ENCODE measurements at regions of chr1 and their contacts with region 1.

Region 1: GRCh38 chr1:108559215-108560186 is at the start of gene EEIG2:
- DNase-seq: peak; percentile 96
- ATAC-seq: peak; percentile 90
- H3K4me3 ChIP-seq: peak within 1 kb of the TSS; percentile 57 to 85 (median 74)
- H3K4me3 Mint-ChIP-seq: peak within 1 kb of the TSS; percentile 98
- H3K27ac ChIP-seq: peak within 1 kb of the TSS; percentile 75 to 82
- H3K27ac Mint-ChIP-seq: peak within 1 kb of the TSS; percentile 92
- H3K4me1 ChIP-seq: peaks cover 54 to 59% of the 10 kb centered on the region in 2 donors
- H3K4me1 Mint-ChIP-seq: peaks cover 29% of the 10 kb centered on the region
- H3K27me3 ChIP-seq: no peaks in the 10 kb centered on the region
- H3K27me3 Mint-ChIP-seq: no peaks in the 10 kb centered on the region
- CTCF ChIP-seq: peak; percentile 75
- total RNA-seq, gene EEIG2: 11.7 and 13.6 TPM in 2 replicates

Region 2: GRCh38 chr1:108075055-108075454 is 484.4 kb before region 1 on chr1:
- CTCF ChIA-PET with region 1: no interaction called
- POLR2A ChIA-PET with region 1: no interaction called
- intact Hi-C with region 1: loop called (anchors 10 kb)
- DNase-seq: peak; percentile 88
- ATAC-seq: peak; percentile 79
- H3K4me3 ChIP-seq: no peak overlapping the region
- H3K4me3 Mint-ChIP-seq: peak overlapping the region; percentile 42
- H3K27ac ChIP-seq: peak overlapping the region; percentile 67 to 71
- H3K27ac Mint-ChIP-seq: peak overlapping the region; percentile 80
- H3K4me1 ChIP-seq: peaks cover 44 to 57% of the 10 kb centered on the region in 2 donors
- H3K4me1 Mint-ChIP-seq: peaks cover 62% of the 10 kb centered on the region
- H3K27me3 ChIP-seq: no peaks in the 10 kb centered on the region
- H3K27me3 Mint-ChIP-seq: no peaks in the 10 kb centered on the region
- CTCF ChIP-seq: no peak

Region 3: DNA sequence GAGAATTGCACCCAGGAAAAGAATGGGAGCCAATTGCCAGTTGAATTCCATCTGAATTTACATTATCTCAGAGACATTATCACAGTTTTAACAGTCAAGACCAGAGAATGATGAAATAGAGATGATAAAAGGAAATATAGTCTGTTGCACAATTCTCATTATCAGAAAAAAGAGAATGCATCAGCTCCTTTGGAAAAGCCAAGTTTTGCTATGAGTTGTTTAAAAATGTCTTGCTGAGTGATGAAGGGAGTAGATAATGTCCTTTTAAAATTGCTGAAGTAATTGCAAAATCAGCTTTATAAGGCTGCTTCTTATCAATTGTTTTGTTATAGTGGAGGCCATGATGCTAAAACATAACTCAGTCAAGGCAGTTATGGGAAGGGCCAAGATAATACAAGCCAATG is 37.5 kb before region 1 on chr1:
- CTCF ChIA-PET with region 1: interaction called, 325 read pairs
- POLR2A ChIA-PET with region 1: no interaction called
- intact Hi-C with region 1: no loop called
- DNase-seq: no peak
- ATAC-seq: no peak
- H3K4me3 ChIP-seq: no peak overlapping the region
- H3K4me3 Mint-ChIP-seq: no peak overlapping the region
- H3K27ac ChIP-seq: no peak overlapping the region
- H3K27ac Mint-ChIP-seq: no peak overlapping the region
- H3K4me1 ChIP-seq: no peaks in the 10 kb centered on the region
- H3K4me1 Mint-ChIP-seq: no peaks in the 10 kb centered on the region
- H3K27me3 ChIP-seq: peaks cover 0 to 4% (median 0%) of the 10 kb centered on the region in 4 experiments
- H3K27me3 Mint-ChIP-seq: peaks cover 16% of the 10 kb centered on the region
- CTCF ChIP-seq: no peak

Region 4: GRCh38 chr1:108590957-108591356 is 31.5 kb after region 1 on chr1:
- CTCF ChIA-PET with region 1: interaction called, 17 read pairs
- POLR2A ChIA-PET with region 1: no interaction called
- intact Hi-C with region 1: no loop called
- DNase-seq: peak; percentile 20
- ATAC-seq: peak; percentile 14
- H3K4me3 ChIP-seq: no peak overlapping the region
- H3K4me3 Mint-ChIP-seq: no peak overlapping the region
- H3K27ac ChIP-seq: no peak overlapping the region
- H3K27ac Mint-ChIP-seq: no peak overlapping the region
- H3K4me1 ChIP-seq: peaks cover 12 to 15% of the 10 kb centered on the region in 2 donors
- H3K4me1 Mint-ChIP-seq: peaks cover 24% of the 10 kb centered on the region
- H3K27me3 ChIP-seq: no peaks in the 10 kb centered on the region
- H3K27me3 Mint-ChIP-seq: no peaks in the 10 kb centered on the region
- CTCF ChIP-seq: no peak

Region 5: DNA sequence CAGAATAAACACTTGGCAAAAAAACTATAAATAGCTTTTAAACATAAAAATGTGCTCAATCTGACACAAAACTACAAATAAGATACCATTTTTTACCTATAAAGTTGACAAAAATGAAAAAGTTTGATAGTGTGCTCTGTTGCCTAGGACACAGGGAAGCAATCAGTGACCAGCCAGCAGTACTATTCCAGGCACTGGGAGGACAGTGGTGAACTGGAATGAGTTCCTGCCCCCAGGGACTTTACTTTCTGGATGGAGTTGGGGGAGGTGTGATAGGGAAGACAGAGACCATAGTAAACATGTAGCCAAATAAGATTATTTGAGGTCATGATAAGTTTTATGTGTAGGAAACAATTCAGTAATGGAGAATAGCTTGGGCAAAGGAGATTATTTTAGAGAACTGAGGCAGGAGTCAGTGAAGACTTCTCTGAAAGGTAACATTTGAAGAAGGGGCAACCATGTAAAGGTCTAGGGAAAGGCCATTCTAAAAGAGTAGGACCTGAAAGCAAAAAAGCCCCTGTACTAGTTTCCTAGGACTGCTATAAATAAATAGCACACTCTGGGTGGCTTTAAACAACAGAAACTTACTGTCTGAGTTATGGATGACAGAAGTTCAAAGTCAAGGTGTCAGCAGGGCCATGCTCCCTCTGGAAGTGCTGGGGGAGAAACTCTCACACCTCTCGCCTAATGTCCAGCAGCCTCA is 42.4 kb after region 1 on chr1:
- CTCF ChIA-PET with region 1: no interaction called
- POLR2A ChIA-PET with region 1: no interaction called
- intact Hi-C with region 1: no loop called
- DNase-seq: no peak
- ATAC-seq: no peak
- H3K4me3 ChIP-seq: no peak overlapping the region
- H3K4me3 Mint-ChIP-seq: no peak overlapping the region
- H3K27ac ChIP-seq: no peak overlapping the region
- H3K27ac Mint-ChIP-seq: no peak overlapping the region
- H3K4me1 ChIP-seq: no peaks in the 10 kb centered on the region
- H3K4me1 Mint-ChIP-seq: no peaks in the 10 kb centered on the region
- H3K27me3 ChIP-seq: no peaks in the 10 kb centered on the region
- H3K27me3 Mint-ChIP-seq: no peaks in the 10 kb centered on the region
- CTCF ChIP-seq: no peak

Region 6: DNA sequence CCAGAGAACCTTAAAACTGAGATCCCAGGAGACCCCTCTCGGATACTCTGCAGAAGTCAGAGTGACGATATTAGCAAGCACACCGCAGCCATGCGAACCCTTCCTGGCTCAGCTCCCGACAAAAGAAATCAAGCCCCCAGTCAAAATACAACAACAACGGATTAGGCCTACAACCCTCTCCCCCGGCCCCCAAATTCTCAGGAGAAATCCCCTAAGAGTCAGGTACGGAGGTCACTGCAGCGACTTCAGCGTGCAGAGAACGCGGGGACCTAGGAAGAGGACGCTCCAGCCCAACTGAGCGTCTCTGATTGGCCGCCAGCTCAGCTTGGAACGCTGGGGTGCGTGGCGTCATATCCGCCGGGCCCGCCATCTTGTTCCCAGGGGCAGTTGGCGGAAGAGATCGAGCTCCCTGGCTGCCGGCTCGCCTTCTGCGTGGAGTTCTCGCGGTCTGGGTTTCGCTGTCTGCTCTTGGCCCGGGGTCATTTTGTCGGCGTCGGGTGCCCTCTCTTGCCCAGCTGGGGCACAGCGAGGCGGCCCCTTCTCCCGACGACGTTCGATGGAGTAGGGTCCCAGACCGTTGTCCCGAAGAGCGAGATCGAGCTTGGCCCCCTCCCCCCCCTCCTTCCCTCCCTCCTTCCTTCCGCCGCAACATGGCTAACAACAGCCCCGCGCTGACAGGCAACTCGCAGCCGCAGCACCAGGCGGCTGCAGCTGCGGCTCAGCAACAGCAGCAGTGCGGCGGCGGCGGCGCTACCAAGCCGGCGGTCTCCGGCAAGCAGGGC is 132.6 kb after region 1 on chr1 and contains the start of gene PRPF38B:
- CTCF ChIA-PET with region 1: interaction called, 17 read pairs
- POLR2A ChIA-PET with region 1: interaction called, 8 read pairs
- intact Hi-C with region 1: loop called (anchors 2 kb)
- DNase-seq: peak; percentile 95
- ATAC-seq: peak; percentile 92
- H3K4me3 ChIP-seq: peak within 1 kb of the TSS; percentile 84 to 93 (median 90)
- H3K4me3 Mint-ChIP-seq: peak within 1 kb of the TSS; percentile 98
- H3K27ac ChIP-seq: peak within 1 kb of the TSS; percentile 96 to 99
- H3K27ac Mint-ChIP-seq: peak within 1 kb of the TSS; percentile 97
- H3K4me1 ChIP-seq: peaks cover 21 to 35% of the 10 kb centered on the region in 2 donors
- H3K4me1 Mint-ChIP-seq: peaks cover 43% of the 10 kb centered on the region
- H3K27me3 ChIP-seq: no peaks in the 10 kb centered on the region
- H3K27me3 Mint-ChIP-seq: peaks cover 3% of the 10 kb centered on the region
- CTCF ChIP-seq: no peak
- total RNA-seq, gene PRPF38B: 107 and 114 TPM in 2 replicates

Region 7: DNA sequence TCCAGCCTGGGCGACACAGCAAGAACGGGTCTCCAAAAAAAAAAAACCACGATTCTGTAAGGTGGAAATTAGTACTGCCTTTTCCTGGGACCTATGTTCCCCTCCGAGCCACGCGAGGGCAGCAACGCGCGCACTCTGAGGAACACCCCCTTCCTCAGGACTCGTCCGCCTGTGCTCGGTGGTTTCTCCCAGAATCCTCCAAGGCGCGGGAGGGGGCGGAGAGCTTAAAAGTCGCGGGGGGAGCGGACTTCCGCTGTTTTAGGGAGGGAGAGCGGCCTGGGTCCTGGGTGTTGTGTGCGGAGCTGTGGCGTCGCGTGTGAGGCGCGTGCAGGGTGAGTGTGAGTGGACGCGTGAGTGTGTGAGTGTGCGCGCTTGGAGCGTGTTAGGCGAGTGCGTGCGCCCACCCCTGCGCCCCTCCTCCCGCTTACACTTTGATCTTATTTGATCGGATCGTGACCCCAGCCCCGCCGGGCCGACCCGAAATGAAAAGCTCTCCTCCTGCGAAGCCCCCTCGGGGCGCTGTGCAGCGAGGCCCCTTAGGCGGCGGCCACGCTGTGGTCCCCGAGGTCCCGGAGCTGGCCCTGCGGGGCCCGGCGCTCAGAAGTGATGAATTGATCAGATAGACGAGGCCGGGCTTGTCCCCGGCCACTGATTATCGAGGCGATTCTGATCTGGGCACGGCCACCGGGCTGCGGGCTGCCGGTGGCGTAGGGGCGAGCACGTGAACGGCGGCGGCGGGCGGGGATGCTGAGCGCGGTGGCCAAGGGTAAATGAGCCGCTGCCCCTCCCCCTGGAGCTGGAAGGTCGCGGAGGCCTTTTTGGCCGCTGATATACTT is 540.7 kb after region 1 on chr1:
- CTCF ChIA-PET with region 1: no interaction called
- POLR2A ChIA-PET with region 1: no interaction called
- intact Hi-C with region 1: loop called (anchors 10 kb)
- DNase-seq: peak; percentile 98
- ATAC-seq: peak; percentile 89
- H3K4me3 ChIP-seq: peak overlapping the region; percentile 45 to 90 (median 85)
- H3K4me3 Mint-ChIP-seq: peak overlapping the region; percentile 94
- H3K27ac ChIP-seq: peak overlapping the region; percentile 91 to 94
- H3K27ac Mint-ChIP-seq: peak overlapping the region; percentile 97
- H3K4me1 ChIP-seq: peaks cover 8 to 17% of the 10 kb centered on the region in 2 donors
- H3K4me1 Mint-ChIP-seq: peaks cover 8% of the 10 kb centered on the region
- H3K27me3 ChIP-seq: no peaks in the 10 kb centered on the region
- H3K27me3 Mint-ChIP-seq: no peaks in the 10 kb centered on the region
- CTCF ChIP-seq: peak; percentile 82

Measured in B cell (primary cell).